Activated CD8-positive, alpha-beta memory T cell treated with anti-CD3 and anti-CD28 coated beads, Interleukin-2, amount 10 ng/mL, durations not matched to agents 7 days and 5 days (primary cell): ENCODE measurements at regions of chr5 and their contacts with region 1.

Region 1: DNA sequence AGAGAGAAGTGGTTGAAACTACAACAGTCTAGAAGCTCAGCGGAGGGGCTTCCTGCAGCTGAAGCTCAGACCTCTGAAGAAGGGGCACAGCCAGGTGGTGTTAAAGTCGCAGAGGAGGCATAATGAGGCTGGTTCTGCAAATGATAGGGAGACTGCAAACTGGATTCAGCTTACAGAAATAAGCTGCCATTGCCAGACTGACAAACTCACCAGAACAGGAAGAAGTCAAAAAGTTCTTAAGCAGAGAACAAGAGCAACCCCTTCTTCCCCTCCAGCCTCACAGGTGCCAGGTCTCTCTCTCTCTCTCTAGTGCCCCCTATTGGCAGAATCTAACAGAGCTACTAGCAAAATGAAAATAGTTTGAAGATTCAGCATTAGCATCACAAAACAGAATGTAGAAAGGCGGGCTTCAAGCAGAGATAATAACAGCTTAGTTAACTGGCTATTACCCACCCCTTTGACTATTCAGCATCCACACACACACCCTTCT is 76.7 kb downstream of the GRAMD2B start:
- DNase-seq: no peak
- ATAC-seq: peak; percentile 57
- H3K4me3 Mint-ChIP-seq: no peak overlapping the region
- H3K27ac Mint-ChIP-seq: no peak overlapping the region
- H3K4me1 Mint-ChIP-seq: peaks cover 4% of the 10 kb centered on the region
- H3K27me3 Mint-ChIP-seq: no peaks in the 10 kb centered on the region

Region 2: DNA sequence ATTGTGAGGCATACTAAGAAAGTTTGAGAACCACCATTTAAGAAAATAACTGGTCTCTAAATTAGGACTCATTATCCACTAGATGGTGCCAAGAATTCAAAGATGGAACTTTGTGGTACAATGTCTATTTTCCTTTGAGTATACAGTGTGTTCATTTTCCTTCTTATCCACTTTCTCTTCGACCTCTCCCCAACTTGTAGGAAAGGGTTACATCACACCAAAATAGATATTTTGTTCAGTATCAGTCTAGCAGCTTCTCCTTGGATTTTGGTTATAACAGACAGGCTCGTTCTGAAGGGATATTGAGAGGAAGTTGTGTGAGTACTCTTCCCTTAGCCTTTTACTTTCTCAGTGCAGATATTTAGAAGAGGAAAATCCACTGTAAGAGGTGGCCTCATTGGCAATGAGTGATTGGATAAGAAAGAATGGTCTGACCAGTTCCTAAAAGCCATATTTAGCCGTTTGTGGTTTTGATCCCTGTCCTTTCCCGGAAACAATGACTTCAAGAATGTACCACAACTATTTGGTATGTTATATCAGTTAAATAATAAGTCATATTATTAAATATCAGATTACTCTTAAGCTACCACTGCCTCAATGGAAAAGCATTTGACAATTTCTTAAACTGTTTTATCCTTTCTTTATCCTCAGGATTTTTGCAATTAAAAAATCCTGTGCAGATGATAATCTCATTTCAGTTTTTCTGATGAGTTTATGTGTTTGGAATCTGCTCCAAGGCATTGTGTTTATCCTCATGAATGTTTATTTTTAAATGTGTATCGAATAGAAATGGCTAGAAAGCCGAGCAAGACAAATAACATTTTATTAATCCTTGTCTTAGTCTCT is 145.7 kb before region 1 on chr5:
- CTCF ChIA-PET with region 1: interaction called, 25 read pairs
- DNase-seq: no peak
- ATAC-seq: peak; percentile 36
- H3K4me3 Mint-ChIP-seq: no peak overlapping the region
- H3K27ac Mint-ChIP-seq: no peak overlapping the region
- H3K4me1 Mint-ChIP-seq: peaks cover 12% of the 10 kb centered on the region
- H3K27me3 Mint-ChIP-seq: peaks cover 21% of the 10 kb centered on the region

Region 3: GRCh38 chr5:126422989-126423788 is 76.7 kb before region 1 on chr5 and contains the start of gene GRAMD2B:
- CTCF ChIA-PET with region 1: interaction called, 15 read pairs
- DNase-seq: peak; percentile 84
- ATAC-seq: peak; percentile 89
- H3K4me3 Mint-ChIP-seq: peak within 1 kb of the TSS; percentile 84
- H3K27ac Mint-ChIP-seq: peak within 1 kb of the TSS; percentile 82
- H3K4me1 Mint-ChIP-seq: peaks cover 36% of the 10 kb centered on the region
- H3K27me3 Mint-ChIP-seq: no peaks in the 10 kb centered on the region
- total RNA-seq, gene GRAMD2B: 4.3 to 7.2 TPM

Region 4: GRCh38 chr5:126538579-126538978 is 38.7 kb after region 1 on chr5:
- CTCF ChIA-PET with region 1: interaction called, 15 read pairs
- DNase-seq: no peak
- ATAC-seq: no peak
- H3K4me3 Mint-ChIP-seq: no peak overlapping the region
- H3K27ac Mint-ChIP-seq: no peak overlapping the region
- H3K4me1 Mint-ChIP-seq: peaks cover 2% of the 10 kb centered on the region
- H3K27me3 Mint-ChIP-seq: peaks cover 7% of the 10 kb centered on the region

Region 5: GRCh38 chr5:126594676-126595485 is 95.0 kb after region 1 on chr5 and contains the start of gene ALDH7A1:
- CTCF ChIA-PET with region 1: no interaction called
- DNase-seq: peak; percentile 41
- ATAC-seq: peak; percentile 65
- H3K4me3 Mint-ChIP-seq: peak within 1 kb of the TSS; percentile 66
- H3K27ac Mint-ChIP-seq: no peak within 1 kb of the TSS
- H3K4me1 Mint-ChIP-seq: peaks cover 13% of the 10 kb centered on the region
- H3K27me3 Mint-ChIP-seq: peaks cover 35% of the 10 kb centered on the region
- total RNA-seq, gene ALDH7A1: 2.6 to 2.8 TPM